Posterior vena cava (tissue), 2 donors: ENCODE measurements at regions of chr12 and their contacts with region 1.

Region 1: DNA sequence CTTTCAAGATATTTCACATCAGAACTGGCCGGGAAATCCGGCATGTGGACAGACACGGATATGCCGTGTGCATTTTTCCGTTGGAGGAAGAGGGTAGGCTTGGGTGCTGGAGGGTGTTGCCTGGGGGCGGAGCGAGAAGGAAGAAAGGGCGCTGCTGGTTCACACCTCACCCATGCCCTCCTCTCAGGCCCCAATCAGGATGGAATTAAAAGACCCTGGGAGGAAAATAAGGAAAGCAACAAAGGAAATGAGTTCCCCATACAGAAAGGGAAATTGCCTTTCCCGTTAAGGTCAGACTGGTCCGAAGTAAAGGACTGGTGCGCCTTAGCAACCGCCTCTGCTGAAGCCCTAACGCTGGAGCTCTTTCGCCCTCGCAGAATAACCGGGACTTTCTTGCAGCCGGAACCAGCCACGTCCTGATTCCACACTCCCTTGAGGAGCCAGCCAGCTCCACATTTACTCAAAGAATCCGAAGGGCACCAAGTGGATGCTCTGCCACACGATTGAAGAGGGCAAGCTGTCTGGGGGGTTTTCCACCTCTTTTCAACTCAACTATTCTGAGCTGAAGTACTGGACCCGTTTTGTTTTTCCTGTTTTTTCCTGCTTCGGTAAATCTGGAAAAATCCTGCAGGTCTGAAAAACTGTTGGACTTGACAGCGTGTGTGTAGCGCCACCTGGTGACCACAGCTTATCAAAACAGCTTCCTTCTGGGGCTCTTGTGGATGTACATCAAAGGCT is 37.7 kb upstream of the BCL2L14 start:
- DNase-seq: peak; percentile 92

Region 2: DNA sequence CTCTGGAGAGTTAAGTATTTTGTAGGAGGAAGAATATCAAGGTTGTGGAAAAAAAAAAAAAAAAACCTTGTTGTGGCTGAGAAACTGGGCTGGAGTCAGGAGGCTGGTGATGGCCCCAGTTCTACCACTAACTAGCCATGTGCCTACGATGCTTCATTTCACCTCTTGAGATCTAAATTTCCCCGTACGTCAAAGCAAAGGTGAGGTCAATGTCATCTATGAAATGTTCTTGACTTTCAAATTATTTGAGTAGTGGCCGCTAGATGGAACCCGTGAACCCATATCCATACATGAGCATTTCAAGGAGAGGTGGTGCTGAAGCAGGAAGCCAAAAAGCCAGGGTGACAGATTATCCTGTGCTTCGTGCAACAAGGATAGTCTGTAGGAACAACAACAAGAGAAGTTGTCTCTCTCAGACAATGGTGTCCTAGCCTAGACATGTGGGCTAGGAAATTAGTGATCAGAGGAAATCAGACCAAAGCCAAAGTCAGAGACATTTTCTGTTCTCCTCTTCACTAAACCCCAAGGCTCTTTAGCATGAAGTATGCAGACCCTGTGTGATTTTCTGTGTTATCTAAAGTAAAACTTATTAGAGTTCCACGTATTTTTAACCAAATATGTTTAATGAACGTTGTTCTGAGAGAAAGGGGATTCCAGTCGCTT is 479.0 kb before region 1 on chr12:
- intact Hi-C with region 1: loop called in 1 of 2 experiments (anchors 10 kb)
- DNase-seq: no peak

Region 3: DNA sequence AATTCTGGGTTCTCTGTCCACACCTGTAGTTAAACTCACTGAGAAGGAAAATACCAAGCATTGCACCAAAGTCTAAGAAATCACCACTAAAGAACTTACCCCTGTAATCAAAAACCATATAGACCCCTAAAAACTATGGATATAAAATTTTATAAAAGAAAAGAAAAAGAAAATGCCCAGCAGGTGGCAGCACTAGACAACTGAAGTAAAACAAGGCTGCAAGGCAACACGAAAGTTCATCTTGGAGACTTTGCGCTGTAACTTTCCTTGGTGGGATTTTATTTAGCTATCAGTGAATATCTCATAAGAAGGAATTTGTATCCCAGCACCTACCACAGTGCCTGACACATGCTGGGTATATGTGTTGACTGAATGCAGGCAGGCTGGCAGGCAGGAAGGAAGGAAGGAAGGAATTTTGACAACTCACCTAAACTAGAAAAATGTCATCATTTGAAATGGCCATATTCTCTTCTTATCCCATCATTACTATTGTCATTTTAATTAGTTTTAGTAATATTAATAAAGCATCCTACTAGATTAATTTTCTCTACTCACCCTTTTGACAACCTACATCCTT is 451.8 kb before region 1 on chr12:
- intact Hi-C with region 1: loop called (anchors 2 to 5 kb)
- DNase-seq: no peak

Region 4: DNA sequence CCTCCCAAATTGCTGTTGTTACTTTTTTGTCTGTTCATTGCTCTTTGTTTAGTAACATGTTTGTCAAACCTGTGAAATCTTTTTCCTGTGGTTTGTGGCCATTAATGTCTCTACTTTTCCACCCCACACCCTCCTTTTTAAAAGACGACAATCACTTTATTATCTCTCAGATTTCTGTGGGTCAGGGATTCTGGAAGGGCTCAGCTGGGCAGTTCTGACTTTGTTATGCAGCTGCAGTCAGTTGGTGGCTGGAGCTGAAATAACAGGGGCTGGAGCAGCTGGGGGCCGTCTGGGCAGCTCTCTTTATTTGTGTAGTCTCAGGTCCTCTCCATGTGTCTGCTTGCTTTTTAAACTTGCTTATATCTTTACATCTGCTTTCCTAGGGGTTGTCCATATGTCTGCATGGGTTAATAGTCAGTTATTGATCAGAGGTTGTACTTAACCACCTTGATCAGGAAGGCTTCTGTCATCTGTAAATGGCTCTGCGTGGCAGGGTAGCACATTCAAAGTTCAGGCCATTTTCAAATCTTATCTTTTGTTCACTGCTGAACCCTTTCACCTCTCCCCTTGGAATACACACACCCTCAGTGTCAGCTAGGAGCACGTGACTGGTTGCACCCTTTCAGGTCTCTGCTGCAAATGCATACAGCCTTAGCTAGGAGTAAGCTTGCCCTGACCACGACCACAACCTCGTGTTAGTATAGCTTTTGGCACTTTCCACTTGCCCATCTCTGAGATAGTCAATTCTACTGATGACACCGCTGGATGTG is 351.7 kb after region 1 on chr12:
- intact Hi-C with region 1: no loop called
- DNase-seq: no peak

Region 5: GRCh38 chr12:13004361-13004760 is 971.3 kb after region 1 on chr12:
- intact Hi-C with region 1: no loop called
- DNase-seq: no peak